HCT116 (cell line): ENCODE measurements at regions of chr10 and their contacts with region 1.

Region 1: GRCh38 chr10:127853868-127854768 is 38.6 kb downstream of the CLRN3 start:
- DNase-seq: peak; percentile 75
- ATAC-seq: peak; percentile 97
- H3K4me3 ChIP-seq: no peak overlapping the region
- H3K27ac ChIP-seq: no peak overlapping the region
- H3K4me1 ChIP-seq: no peaks in the 10 kb centered on the region
- H3K27me3 ChIP-seq: 0 out of 2 replicates have a peak, but pooled peaks cover 2% of the 10 kb centered on the region
- CTCF ChIP-seq: peak; percentile 88 to 96 (median 91)
- POLR2A ChIP-seq: no peak
- RAD21 ChIP-seq: peak; percentile 99

Region 2: DNA sequence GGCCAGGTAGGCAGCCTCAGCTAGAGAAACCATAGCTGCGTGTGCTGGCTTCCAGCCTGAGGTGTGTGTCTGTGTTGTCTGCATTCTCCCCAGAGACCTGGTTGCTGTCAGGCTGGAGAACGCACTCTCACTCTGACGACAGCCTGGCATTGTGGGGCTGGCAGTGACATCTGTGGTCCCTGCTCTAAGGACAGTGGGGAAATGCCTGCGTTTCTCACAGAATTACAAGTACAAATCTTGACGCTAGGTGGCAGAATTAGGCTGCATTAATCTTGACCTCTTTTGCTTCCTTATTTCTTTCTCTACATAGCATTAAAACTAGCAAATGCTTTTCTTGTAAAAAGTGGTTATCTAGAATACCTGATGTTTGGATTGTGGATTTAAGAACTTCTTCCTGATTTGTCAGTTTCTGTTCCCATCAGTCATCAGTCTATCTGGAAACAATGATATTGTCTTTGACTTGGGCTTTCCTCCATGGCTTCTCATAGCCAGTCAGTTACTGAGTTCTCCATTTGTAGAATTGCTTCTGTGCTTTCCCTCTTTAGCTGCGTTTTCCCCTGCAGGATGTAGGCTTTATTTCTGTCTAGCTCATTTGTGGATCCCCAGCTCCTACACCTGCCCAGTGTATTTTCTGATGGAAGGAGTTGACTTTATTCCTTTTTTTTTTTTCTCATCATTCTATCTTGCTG is 1871.7 kb before region 1 on chr10:
- CTCF ChIA-PET with region 1: no interaction called
- POLR2A ChIA-PET with region 1: no interaction called
- RAD21 ChIA-PET with region 1: no interaction called
- intact Hi-C with region 1: loop called (anchors 5 kb)
- DNase-seq: peak; percentile 64
- ATAC-seq: peak; percentile 95
- H3K4me3 ChIP-seq: no peak overlapping the region
- H3K27ac ChIP-seq: no peak overlapping the region
- H3K4me1 ChIP-seq: no peaks in the 10 kb centered on the region
- H3K27me3 ChIP-seq: peaks cover 15% of the 10 kb centered on the region; the same call in 1 of the 2 replicates
- CTCF ChIP-seq: peak; percentile 59 to 78 (median 75)
- POLR2A ChIP-seq: no peak
- RAD21 ChIP-seq: peak; percentile 92

Region 3: GRCh38 chr10:127492607-127493250 is 361.4 kb before region 1 on chr10:
- CTCF ChIA-PET with region 1: interaction called, 18 read pairs
- POLR2A ChIA-PET with region 1: no interaction called
- RAD21 ChIA-PET with region 1: interaction called, 3 to 7 read pairs
- intact Hi-C with region 1: loop called (anchors 1 kb)
- DNase-seq: peak; percentile 24
- ATAC-seq: peak; percentile 98
- H3K4me3 ChIP-seq: no peak overlapping the region
- H3K27ac ChIP-seq: no peak overlapping the region
- H3K4me1 ChIP-seq: no peaks in the 10 kb centered on the region
- H3K27me3 ChIP-seq: peaks cover 53% of the 10 kb centered on the region
- CTCF ChIP-seq: peak; percentile 71 to 86 (median 71)
- POLR2A ChIP-seq: no peak
- RAD21 ChIP-seq: peak; percentile 55

Region 4: DNA sequence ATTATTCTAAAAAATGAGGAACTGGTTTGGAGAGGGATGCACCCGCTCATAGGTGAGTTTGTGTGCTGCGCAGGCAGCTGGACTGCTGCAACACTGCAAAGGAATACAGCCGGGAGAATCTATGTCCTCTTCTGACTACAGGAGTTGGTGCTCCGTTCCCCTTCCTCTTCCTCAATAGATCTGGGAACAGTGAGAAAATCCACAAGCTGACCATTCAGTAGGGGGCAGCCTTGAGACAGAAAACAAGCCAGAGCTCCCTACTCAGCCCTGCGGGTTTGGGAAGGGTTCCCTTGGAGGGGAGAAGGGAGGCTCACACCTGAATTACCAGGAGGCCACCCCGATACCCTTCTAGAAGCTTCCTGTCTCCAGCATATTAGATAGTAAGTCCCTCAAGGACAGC is 204.5 kb before region 1 on chr10:
- CTCF ChIA-PET with region 1: interaction called, 21 read pairs
- POLR2A ChIA-PET with region 1: no interaction called
- RAD21 ChIA-PET with region 1: no interaction called
- intact Hi-C with region 1: loop called (anchors 1 kb)
- DNase-seq: peak; percentile 27
- ATAC-seq: peak; percentile 95
- H3K4me3 ChIP-seq: no peak overlapping the region
- H3K27ac ChIP-seq: no peak overlapping the region
- H3K4me1 ChIP-seq: no peaks in the 10 kb centered on the region
- H3K27me3 ChIP-seq: peaks cover 17% of the 10 kb centered on the region
- CTCF ChIP-seq: peak; percentile 42 to 70 (median 63); a peak in 5 of 6 replicates
- POLR2A ChIP-seq: no peak
- RAD21 ChIP-seq: peak; percentile 63

Region 5: DNA sequence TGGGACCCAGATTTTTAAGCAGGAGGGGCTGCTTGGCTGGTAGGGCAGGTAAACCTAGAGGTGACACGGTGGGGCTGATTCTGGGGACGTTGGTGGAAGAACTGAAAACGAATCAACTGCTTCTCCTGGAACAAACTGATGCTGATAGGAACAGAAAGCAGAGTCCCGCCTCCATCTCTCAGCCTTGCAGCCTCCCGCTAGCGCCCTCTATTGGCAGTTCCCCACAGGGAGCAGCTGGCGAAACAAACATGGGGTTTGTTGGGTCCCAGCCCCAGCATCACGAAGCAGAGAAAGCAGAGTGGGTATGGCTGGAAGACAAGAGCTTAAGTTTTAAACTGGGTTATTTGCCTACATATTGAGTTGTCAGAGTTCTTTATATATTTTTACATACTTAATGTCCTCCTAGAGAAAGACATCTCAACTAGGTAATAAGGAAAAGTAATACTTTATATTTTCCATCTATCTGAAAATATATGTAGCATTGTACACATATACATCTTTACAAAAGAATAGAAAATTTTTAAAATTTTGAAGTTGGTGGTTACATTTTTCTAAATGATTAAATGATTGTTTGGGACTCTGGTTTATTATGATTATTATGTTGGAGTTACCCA is 159.4 kb before region 1 on chr10:
- CTCF ChIA-PET with region 1: interaction called, 14 read pairs
- POLR2A ChIA-PET with region 1: no interaction called
- RAD21 ChIA-PET with region 1: no interaction called
- intact Hi-C with region 1: no loop called
- DNase-seq: peak; percentile 85
- ATAC-seq: peak; percentile 98
- H3K4me3 ChIP-seq: no peak overlapping the region
- H3K27ac ChIP-seq: no peak overlapping the region
- H3K4me1 ChIP-seq: no peaks in the 10 kb centered on the region
- H3K27me3 ChIP-seq: peaks cover 25% of the 10 kb centered on the region
- CTCF ChIP-seq: peak; percentile 66 to 100 (median 100)
- POLR2A ChIP-seq: no peak
- RAD21 ChIP-seq: peak; percentile 56

Region 6: GRCh38 chr10:128011175-128011979 is 157.3 kb after region 1 on chr10:
- CTCF ChIA-PET with region 1: interaction called, 37 read pairs
- POLR2A ChIA-PET with region 1: no interaction called
- RAD21 ChIA-PET with region 1: interaction called, 6 to 7 read pairs
- intact Hi-C with region 1: loop called (anchors 1 kb)
- DNase-seq: peak; percentile 54
- ATAC-seq: peak; percentile 95
- H3K4me3 ChIP-seq: no peak overlapping the region; a peak in 1 of 4 replicates
- H3K27ac ChIP-seq: no peak overlapping the region
- H3K4me1 ChIP-seq: peaks cover 3 to 9% of the 10 kb centered on the region in 2 experiments; a peak in 3 of 4 replicates
- H3K27me3 ChIP-seq: no peaks in the 10 kb centered on the region; the same call in 1 of the 2 replicates
- CTCF ChIP-seq: peak; percentile 98 to 99 (median 99)
- POLR2A ChIP-seq: no peak
- RAD21 ChIP-seq: peak; percentile 100

Region 7: DNA sequence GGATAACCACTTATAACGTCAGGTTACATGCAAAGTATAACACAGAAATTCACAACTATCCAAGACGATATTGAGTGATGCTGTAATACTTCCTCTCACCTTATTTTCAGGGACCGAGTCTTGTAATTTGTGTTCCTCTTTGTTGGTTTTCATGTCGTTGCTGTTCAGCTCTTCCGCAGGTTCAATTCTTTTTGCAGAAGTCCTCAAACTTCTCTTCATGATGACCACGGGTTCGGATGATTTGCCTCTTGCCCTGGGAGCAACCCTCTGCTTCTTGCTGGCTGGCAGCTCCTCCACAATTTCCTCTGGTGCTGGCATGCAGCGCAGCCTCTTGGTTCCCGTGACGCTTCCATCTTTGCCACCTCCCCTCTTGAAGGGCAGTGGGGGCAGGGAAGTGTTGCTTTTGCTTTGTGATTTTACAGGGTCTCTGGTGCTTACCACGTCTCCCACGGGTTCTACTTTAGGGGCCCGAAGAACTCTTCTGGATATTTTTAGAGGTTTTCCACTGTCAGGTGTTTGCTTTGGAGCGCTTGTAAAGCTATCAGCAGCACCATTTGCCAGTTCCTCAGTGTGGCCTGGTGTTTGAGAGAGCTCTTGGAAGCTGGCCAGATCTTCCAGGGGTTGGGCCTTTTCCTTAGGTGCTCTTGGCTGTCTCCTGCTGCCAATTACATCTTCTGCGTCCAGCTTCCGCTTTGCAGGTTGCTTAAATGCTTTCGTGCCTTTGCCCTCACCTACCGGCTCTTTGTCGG is 248.5 kb after region 1 on chr10:
- CTCF ChIA-PET with region 1: no interaction called
- POLR2A ChIA-PET with region 1: no interaction called
- RAD21 ChIA-PET with region 1: no interaction called
- intact Hi-C with region 1: no loop called
- DNase-seq: no peak
- ATAC-seq: no peak
- H3K4me3 ChIP-seq: no peak overlapping the region
- H3K27ac ChIP-seq: no peak overlapping the region
- H3K4me1 ChIP-seq: no peaks in the 10 kb centered on the region
- H3K27me3 ChIP-seq: no peaks in the 10 kb centered on the region
- CTCF ChIP-seq: no peak
- POLR2A ChIP-seq: no peak
- RAD21 ChIP-seq: no peak